T-cell (primary cell): ENCODE measurements at regions of chr3 and their contacts with region 1.

Region 1: GRCh38 chr3:51384726-51385473 is at the start of gene MANF:
- DNase-seq: peak; percentile 90 to 99 (median 97)
- ATAC-seq: peak; percentile 95 to 97 (median 96)
- H3K4me3 ChIP-seq: peak within 1 kb of the TSS; percentile 93 to 96
- H3K4me3 Mint-ChIP-seq: peak within 1 kb of the TSS; percentile 98 to 99 (median 99)
- H3K27ac ChIP-seq: peak within 1 kb of the TSS; percentile 88
- H3K27ac Mint-ChIP-seq: peak within 1 kb of the TSS; percentile 99
- H3K4me1 ChIP-seq: peaks cover 20 to 46% of the 10 kb centered on the region in 2 experiments
- H3K4me1 Mint-ChIP-seq: peaks cover 47 to 56% (median 49%) of the 10 kb centered on the region in 3 donors
- H3K27me3 ChIP-seq: no peaks in the 10 kb centered on the region
- H3K27me3 Mint-ChIP-seq: no peaks in the 10 kb centered on the region
- total RNA-seq, gene MANF: 36.4 to 71.9 (median 56.7) TPM

Region 2: GRCh38 chr3:50674349-50675178 is 710.3 kb before region 1 on chr3 and contains the start of gene DOCK3:
- CTCF ChIA-PET with region 1: no interaction called
- POLR2A ChIA-PET with region 1: interaction called in 1 of 2 experiments, 11 read pairs
- DNase-seq: peak; percentile 25 to 85 (median 54)
- ATAC-seq: peak; percentile 93 to 94 (median 94)
- H3K4me3 ChIP-seq: peak within 1 kb of the TSS; percentile 55 to 60
- H3K4me3 Mint-ChIP-seq: peak within 1 kb of the TSS; percentile 64 to 80 (median 75)
- H3K27ac ChIP-seq: no peak within 1 kb of the TSS
- H3K27ac Mint-ChIP-seq: no peak within 1 kb of the TSS
- H3K4me1 ChIP-seq: peaks cover 2 to 8% of the 10 kb centered on the region in 2 experiments
- H3K4me1 Mint-ChIP-seq: peaks cover 4 to 7% (median 6%) of the 10 kb centered on the region in 3 donors
- H3K27me3 ChIP-seq: peaks cover 18 to 23% of the 10 kb centered on the region in 2 experiments
- H3K27me3 Mint-ChIP-seq: peaks cover 26 to 27% of the 10 kb centered on the region in 2 donors
- total RNA-seq, gene DOCK3: 2.0 to 3.2 (median 2.6) TPM